Activated CD8-positive, alpha-beta T cell treated with anti-CD3 and anti-CD28 coated beads, Interleukin-2, amount 10 ng/mL, durations not matched to agents 7 days and 5 days (primary cell): ENCODE measurements at regions of chr11 and their contacts with region 1.

Region 1: DNA sequence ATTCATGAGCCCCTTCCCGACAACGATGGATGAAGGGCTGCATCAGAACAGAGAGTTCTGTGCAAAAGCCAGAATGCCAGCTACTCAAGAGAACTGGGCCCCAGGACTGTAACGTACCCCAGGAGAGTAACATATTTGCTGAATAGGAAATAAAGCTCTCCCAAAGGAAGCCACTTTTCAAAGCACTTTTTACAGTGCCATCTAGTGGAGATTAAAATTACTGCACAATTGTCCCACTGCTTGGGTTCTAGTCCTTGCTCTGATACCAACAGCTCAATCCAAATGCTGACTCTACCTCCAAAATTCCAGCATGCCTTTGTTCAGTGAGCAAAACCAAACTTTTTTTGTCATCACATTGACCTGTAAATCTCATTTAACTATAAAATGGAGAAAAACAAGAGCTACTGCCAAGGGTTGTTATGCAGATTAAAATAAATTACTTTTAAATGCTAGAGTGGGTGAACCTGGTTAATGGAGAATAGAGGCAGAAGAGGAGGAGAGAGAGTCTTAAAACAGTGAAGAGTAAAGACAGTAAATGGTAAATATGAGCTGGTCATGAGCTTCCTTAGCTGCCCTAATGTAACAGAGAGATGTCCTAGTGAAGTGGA is 87.6 kb upstream of the FSHB start:
- DNase-seq: peak; percentile 21
- ATAC-seq: no peak
- H3K4me3 Mint-ChIP-seq: no peak overlapping the region
- H3K27ac Mint-ChIP-seq: no peak overlapping the region
- H3K4me1 Mint-ChIP-seq: no peaks in the 10 kb centered on the region
- H3K27me3 Mint-ChIP-seq: peaks cover 4% of the 10 kb centered on the region

Region 2: GRCh38 chr11:30196400-30197206 is 53.4 kb after region 1 on chr11:
- CTCF ChIA-PET with region 1: interaction called, 13 read pairs
- POLR2A ChIA-PET with region 1: no interaction called
- DNase-seq: peak; percentile 60
- ATAC-seq: peak; percentile 61
- H3K4me3 Mint-ChIP-seq: no peak overlapping the region
- H3K27ac Mint-ChIP-seq: no peak overlapping the region
- H3K4me1 Mint-ChIP-seq: no peaks in the 10 kb centered on the region
- H3K27me3 Mint-ChIP-seq: peaks cover 10% of the 10 kb centered on the region